ENCODE measurements at regions of chrX and their contacts with region 1.

Region 1: DNA sequence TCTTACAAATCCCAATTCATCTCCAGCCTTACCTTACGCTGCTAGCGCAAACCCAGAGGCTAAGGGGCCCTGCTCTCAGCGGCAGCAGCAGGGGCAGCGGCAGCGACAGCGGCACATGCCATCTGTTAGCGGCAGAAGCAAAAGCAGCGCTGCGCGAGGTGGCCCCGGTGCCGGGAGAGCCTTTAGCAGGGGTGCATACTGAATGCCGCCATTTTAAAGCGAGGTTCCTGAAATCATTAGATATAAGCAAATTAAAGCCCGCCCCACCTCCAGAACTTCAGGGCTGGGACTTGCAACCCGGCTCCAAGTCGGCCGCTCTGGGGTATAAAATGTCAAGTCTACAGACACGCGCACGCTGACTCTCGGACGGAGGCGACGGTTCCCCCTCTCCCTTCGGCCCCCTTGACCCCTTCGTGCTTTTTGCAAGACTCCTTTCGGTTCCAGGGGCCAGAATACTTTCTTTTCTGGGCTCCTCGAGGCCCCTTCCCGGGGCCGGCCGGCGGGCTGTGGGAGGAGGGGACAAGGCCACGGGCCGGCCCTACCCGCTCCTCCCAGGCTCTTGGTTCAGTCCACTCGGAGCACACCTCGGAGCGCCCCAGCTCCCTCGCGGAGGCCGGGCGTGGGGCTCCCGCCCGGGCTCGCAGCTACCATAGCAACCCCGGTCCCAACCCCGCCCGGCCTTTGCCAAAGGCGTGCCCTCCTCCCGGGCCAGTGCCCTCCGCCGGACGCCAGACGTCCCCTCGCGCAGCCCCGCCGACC is at the start of gene MBNL3:
- DNase-seq: peak; percentile 70
- ATAC-seq: peak; percentile 74
- H3K4me3 ChIP-seq: peak within 1 kb of the TSS; percentile 88
- H3K27ac ChIP-seq: peak within 1 kb of the TSS; percentile 81
- H3K4me1 ChIP-seq: peaks cover 12% of the 10 kb centered on the region
- H3K27me3 ChIP-seq: no peaks in the 10 kb centered on the region
- CTCF ChIP-seq: no peak
- total RNA-seq, gene MBNL3: 4.4 and 9.7 TPM in 2 replicates

Region 2: GRCh38 chrX:132393992-132394391 is 95.0 kb before region 1 on chrX:
- CTCF ChIA-PET with region 1: no interaction called
- POLR2A ChIA-PET with region 1: no interaction called
- intact Hi-C with region 1: loop called (anchors 10 kb)
- DNase-seq: no peak
- ATAC-seq: no peak
- H3K4me3 ChIP-seq: no peak overlapping the region
- H3K27ac ChIP-seq: no peak overlapping the region
- H3K4me1 ChIP-seq: no peaks in the 10 kb centered on the region
- H3K27me3 ChIP-seq: no peaks in the 10 kb centered on the region
- CTCF ChIP-seq: no peak

Region 3: GRCh38 chrX:132592880-132593279 is 103.9 kb after region 1 on chrX:
- CTCF ChIA-PET with region 1: interaction called, 4 read pairs
- POLR2A ChIA-PET with region 1: no interaction called
- intact Hi-C with region 1: loop called (anchors 1 kb)
- DNase-seq: no peak
- ATAC-seq: peak; percentile 50
- H3K4me3 ChIP-seq: no peak overlapping the region
- H3K27ac ChIP-seq: no peak overlapping the region
- H3K4me1 ChIP-seq: peaks cover 10% of the 10 kb centered on the region
- H3K27me3 ChIP-seq: no peaks in the 10 kb centered on the region
- CTCF ChIP-seq: peak; percentile 45